Endothelial cell of umbilical vein (primary cell): ENCODE measurements at regions of chr6 and their contacts with region 1.

Region 1: DNA sequence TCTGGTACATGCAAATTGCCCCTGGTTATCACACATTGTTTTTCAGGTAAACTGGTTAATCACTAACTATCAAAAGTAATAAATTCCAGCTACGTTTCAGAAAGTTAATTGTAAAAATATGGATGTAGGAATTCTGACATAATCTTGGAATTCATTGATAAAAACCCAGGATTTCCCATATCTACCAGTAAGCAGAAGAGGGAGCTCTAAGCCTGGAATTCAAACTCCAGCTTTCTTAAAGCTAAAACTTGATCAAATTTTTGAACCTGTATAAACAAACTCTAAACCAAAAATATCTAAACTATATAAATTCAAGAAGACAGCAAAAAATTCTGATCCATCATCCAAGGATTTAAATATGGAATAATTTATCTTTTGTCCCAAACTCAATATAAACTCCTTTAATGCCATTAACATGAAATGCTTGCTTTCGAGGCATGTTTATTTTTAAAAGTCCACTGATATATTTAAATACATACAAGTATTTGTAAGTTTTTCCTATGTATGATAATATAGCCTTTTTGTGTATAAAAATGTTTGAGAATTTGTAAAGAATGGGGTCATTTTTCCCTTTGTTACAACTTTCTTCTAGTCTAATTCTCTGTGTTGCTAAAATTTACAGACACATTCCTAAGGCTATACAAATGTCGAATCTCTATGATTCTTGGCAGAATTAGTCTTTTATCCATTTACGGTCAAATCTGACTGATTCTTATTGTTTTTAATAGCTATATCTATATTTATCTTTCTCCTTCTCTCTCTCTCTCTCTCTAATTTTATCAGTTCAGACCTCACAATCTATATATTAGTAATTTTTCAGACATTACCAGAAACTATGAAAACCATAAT is 91.4 kb upstream of the RNF217 start:
- DNase-seq: peak; percentile 46
- H3K4me3 ChIP-seq: no peak overlapping the region
- H3K27ac ChIP-seq: no peak overlapping the region
- H3K4me1 ChIP-seq: no peaks in the 10 kb centered on the region
- H3K27me3 ChIP-seq: no peaks in the 10 kb centered on the region
- CTCF ChIP-seq: peak; percentile 31 to 51
- POLR2A ChIP-seq: no peak

Region 2: DNA sequence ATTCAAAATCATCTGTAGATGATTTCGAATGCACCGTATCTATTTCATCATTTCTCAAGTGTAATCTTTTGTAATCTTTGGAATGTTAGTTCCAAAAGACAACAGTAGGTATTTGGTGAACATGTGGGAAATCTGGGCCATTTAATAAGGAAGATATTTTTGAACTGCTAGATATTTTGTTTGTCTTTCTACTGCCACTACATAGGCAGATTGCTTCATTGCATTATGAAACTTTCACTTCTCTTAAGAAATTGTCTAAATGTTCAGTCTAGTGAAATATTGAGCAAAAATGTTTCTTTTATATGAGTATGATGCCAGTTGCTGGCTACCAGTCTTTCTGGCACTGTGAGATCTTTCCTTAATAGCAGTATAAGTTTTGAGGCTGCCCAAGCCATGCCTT is 436.4 kb before region 1 on chr6:
- CTCF ChIA-PET with region 1: no interaction called
- POLR2A ChIA-PET with region 1: no interaction called
- dilution Hi-C with region 1: no loop called
- intact Hi-C with region 1: no loop called
- DNase-seq: no peak
- H3K4me3 ChIP-seq: no peak overlapping the region
- H3K27ac ChIP-seq: no peak overlapping the region
- H3K4me1 ChIP-seq: no peaks in the 10 kb centered on the region
- H3K27me3 ChIP-seq: no peaks in the 10 kb centered on the region
- CTCF ChIP-seq: no peak
- POLR2A ChIP-seq: no peak

Region 3: DNA sequence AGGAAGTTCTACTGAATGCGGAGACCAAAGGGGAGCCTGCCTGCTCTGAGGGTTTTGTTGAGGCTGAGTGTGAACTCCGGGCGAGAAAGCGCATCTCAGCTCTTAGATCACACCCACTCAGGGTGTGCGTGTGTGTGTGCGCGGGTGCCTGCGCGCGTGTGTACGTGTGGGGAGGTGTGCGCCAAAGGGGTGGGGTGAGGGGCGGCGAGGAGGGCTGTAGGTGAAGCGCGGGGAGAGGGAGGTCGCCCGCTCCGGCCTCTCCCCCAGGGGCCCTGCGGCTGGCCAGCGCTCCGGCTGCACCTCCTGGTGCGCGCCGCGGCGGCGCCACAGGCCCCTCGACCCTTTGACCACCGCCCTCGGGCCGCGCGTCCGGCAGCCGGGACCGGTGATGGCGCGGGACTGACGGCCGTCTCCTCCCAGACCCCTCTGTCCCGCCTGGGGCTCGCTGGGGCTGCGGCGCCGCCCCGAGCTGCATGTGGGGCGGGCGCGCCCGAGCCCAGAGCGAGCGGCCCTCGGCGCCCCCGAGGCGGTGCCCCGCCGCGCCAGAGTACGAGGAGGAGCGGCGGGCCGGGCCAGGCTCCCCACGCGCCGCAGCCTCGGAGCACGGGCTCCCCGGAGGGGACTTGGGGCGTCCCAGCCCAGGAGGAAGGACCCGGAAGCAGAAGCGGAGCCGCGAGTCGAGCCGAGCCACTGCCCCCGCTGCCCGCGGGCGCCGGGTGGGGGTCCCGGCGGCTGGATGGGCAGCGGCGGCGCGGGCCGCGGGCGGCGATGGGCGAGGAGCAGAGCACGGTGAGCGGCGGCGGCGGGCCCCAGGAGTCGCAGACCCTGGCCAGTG is 91.2 kb after region 1 on chr6 and contains the start of gene RNF217:
- CTCF ChIA-PET with region 1: interaction called, 10 read pairs
- POLR2A ChIA-PET with region 1: no interaction called
- dilution Hi-C with region 1: no loop called
- intact Hi-C with region 1: loop called (anchors 1 kb)
- DNase-seq: peak; percentile 75
- H3K4me3 ChIP-seq: peak within 1 kb of the TSS; percentile 75 to 95 (median 93)
- H3K27ac ChIP-seq: peak within 1 kb of the TSS; percentile 69
- H3K4me1 ChIP-seq: peaks cover 40% of the 10 kb centered on the region
- H3K27me3 ChIP-seq: no peaks in the 10 kb centered on the region
- CTCF ChIP-seq: no peak
- POLR2A ChIP-seq: no peak
- total RNA-seq, gene RNF217: 32.5 and 33.1 TPM in 2 replicates

Region 4: DNA sequence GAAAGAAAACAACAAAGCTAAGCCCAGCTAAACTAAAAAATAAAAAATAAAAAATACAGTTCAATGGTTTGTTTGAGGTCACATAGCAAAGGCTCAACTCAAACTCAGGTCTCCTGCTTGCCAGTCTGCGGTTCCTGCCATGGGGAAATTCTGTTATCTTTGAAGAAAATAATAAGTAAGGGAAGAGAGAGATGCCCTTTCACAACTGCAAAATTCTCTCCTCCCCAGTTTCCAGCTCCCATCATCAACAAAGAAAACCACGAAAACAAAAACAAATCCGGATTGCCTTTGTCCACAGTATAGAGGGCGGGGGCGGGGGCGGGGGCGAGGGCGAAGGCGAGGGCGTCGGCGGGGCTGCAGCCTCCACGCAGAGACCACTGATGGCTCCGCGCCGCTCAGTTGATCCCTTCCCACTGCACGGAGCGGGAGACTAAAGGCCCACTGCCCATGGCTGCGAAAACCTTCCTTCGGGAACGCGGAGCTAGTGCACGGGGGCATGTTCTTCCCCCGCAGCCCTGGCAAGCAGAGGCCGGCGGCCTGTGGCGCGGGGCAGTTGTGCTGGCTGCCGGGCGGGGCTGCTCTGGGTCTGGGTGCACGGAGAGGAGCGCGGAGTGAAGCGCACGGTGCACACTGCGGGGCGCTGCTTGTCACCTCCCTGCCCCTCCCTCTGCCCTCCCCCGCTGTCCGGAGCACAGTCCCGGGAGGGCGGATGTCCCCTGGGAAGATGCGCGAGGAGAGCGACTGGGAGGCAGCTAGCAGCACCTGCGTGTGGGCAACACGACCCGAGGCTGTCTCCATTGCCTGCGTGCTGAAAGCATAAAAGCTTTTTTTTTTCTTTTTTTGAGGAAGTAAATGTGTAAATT is 228.6 kb after region 1 on chr6:
- CTCF ChIA-PET with region 1: interaction called, 6 read pairs
- POLR2A ChIA-PET with region 1: no interaction called
- dilution Hi-C with region 1: loop called (anchors 25 kb)
- intact Hi-C with region 1: no loop called
- DNase-seq: peak; percentile 60
- H3K4me3 ChIP-seq: peak overlapping the region; percentile 58 to 80 (median 63)
- H3K27ac ChIP-seq: peak overlapping the region; percentile 32
- H3K4me1 ChIP-seq: peaks cover 23% of the 10 kb centered on the region
- H3K27me3 ChIP-seq: no peaks in the 10 kb centered on the region
- CTCF ChIP-seq: no peak
- POLR2A ChIP-seq: no peak

Region 5: GRCh38 chr6:125153391-125154117 is 282.7 kb after region 1 on chr6 and contains the start of gene TPD52L1:
- CTCF ChIA-PET with region 1: interaction called, 17 read pairs
- POLR2A ChIA-PET with region 1: no interaction called
- dilution Hi-C with region 1: no loop called
- intact Hi-C with region 1: no loop called
- DNase-seq: peak; percentile 62
- H3K4me3 ChIP-seq: peak within 1 kb of the TSS; percentile 1 to 45 (median 27)
- H3K27ac ChIP-seq: no peak within 1 kb of the TSS
- H3K4me1 ChIP-seq: peaks cover 14% of the 10 kb centered on the region
- H3K27me3 ChIP-seq: peaks cover 0 to 10% of the 10 kb centered on the region in 2 experiments
- CTCF ChIP-seq: peak; percentile 82 to 89
- POLR2A ChIP-seq: no peak
- total RNA-seq, gene TPD52L1: 0.29 and 0.83 TPM in 2 replicates

Region 6: DNA sequence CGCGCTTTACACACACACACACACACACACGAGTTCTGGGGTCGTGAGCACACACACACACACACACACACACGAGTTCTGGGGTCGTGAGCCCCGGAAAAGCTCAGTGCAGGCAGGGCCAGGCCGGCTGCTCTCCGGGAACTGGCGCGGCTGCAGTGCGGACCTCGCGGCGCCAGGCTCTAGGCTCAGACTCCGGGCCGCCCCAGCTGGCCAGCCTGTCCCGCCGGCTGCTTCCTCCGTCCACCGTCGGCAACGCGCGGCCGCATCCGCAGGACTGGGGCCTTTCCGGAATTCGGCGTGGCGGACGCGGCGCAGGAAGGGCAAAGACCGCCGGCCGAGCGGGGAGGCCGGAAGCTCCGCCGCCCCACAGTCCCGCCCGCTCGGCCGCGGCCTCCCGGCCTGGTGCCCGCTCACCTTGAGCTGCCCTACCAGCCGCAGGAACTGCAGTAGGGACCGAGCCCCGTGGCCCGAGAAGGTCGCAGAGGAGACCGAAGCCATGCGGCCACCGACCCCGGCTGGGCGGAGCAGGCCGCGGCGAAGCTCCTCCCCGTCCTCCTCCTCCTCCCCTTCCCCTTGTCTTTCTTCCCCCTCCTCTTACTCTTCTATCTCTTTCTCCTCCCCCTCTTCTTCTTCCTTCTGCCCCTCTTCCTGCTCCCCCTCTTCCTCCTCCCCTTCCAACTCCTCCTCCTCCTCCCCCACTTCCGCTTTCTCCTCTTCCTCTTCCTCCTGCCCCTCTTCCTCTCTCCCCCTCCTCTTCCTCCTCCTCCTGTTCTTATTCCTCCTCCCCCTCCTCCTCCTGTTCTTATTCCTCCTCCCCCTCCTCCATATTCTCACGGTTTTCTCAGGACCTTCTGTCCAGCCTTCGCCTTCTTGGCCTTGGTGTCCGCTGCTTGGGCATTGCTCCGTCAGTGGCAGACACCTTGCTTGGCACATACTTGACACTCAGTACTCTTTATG is 430.9 kb after region 1 on chr6 and contains the start of gene HDDC2:
- CTCF ChIA-PET with region 1: interaction called, 17 read pairs
- POLR2A ChIA-PET with region 1: no interaction called
- dilution Hi-C with region 1: no loop called
- intact Hi-C with region 1: loop called (anchors 2 kb)
- DNase-seq: peak; percentile 78
- H3K4me3 ChIP-seq: peak within 1 kb of the TSS; percentile 10 to 56 (median 47)
- H3K27ac ChIP-seq: peak within 1 kb of the TSS; percentile 72
- H3K4me1 ChIP-seq: peaks cover 10% of the 10 kb centered on the region
- H3K27me3 ChIP-seq: peaks cover 8 to 12% of the 10 kb centered on the region in 2 experiments
- CTCF ChIP-seq: no peak
- POLR2A ChIP-seq: peak; percentile 49
- total RNA-seq, gene HDDC2: 12.6 and 13.6 TPM in 2 replicates